CD4-positive, alpha-beta memory T cell (primary cell): ENCODE measurements at regions of chr10 and their contacts with region 1.

Region 1: DNA sequence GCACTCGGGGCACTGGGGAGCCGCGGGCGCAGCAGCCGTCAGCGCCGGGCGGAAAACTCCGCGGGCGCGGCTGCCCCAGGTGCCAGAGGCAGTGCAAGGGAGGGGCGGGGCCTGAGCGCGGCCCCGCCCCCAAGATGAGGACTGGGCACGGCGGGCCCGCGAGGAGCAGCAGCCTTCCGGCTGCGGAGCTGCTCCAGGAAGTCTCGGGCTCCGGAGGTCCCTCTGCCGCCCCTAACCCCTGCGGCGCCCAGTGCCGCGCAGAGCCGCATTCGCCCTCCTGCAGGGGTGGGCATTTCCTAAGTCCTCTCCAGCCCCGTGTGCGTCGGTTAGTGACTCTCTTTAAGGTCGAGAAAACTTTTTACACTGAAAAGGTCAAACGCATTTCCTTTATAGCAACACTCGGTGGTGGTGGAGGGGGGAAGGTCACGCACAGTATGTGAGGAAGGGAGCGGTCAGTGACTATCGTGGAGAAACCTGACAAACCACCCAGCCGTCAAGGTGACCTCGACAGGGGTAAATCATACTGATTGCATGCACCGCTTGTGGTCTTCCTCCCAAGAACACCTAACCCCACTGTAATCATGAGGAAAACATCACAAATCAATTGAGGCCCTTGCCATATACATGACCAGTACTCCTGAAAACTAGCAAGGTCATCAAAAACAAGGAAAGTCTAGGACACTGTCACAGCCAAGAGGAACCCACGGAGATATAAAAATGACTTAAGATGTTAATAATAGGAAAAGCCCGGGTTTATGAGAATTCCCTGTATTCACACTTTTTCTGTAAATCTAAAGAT is at the start of gene ANXA11:
- DNase-seq: peak; percentile 82 to 86 (median 83)
- H3K4me3 ChIP-seq: peak within 1 kb of the TSS; percentile 63 to 96
- H3K4me3 Mint-ChIP-seq: peak within 1 kb of the TSS; percentile 88 to 99 (median 92)
- H3K27ac ChIP-seq: peak within 1 kb of the TSS; percentile 82
- H3K27ac Mint-ChIP-seq: peak within 1 kb of the TSS; percentile 93 to 97 (median 95)
- H3K4me1 ChIP-seq: peaks cover 54% of the 10 kb centered on the region
- H3K4me1 Mint-ChIP-seq: peaks cover 35 to 58% (median 49%) of the 10 kb centered on the region in 4 donors
- H3K27me3 ChIP-seq: no peaks in the 10 kb centered on the region
- H3K27me3 Mint-ChIP-seq: no peaks in the 10 kb centered on the region
- total RNA-seq, gene ANXA11: 202 to 211 TPM

Region 2: DNA sequence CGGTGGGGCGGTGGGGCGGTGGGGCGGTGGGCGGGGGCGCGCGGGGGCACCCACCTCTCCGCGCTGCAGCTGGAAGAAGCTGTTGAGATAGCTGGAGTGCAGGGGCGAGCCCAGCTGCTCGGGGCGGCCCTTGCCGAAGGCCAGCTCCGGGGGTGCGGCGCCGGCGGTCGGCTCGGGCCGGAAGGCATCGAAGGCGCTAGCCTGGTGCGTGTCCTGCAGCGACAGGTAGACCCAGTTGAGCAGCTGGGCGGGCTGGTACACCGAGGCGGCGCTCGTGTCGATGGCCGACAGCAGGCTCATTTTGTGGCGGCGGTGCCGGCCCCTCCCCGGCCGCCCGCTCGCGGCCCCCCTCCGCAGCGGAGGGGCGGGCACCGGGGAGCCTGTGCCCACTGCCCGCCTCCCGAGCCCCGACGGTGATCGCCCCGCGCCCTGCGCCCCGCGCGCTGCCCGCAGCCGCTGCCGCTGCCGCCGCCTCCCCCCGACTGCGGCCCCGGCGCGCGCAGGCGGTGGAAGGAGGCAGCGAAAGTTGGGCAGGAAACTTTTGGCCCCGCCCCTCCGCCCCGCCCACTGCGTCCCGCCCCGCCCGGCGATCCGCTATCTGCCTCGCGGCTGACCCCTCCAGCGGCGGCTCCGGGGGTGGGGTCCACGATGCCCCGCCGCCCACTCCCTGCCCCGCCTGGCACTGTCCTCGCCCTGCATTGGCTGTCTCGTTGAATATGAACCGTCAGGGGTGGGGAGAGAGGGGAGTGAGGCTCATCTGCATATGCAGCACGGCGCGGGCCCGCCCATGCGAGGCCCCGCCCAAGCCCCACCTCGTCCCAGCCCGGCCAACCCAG is 760.3 kb before region 1 on chr10 and contains the start of gene ZCCHC24:
- CTCF ChIA-PET with region 1: no interaction called
- POLR2A ChIA-PET with region 1: no interaction called
- intact Hi-C with region 1: loop called (anchors 5 kb)
- DNase-seq: peak; percentile 95 to 97 (median 97)
- H3K4me3 ChIP-seq: peak within 1 kb of the TSS; percentile 63 to 64
- H3K4me3 Mint-ChIP-seq: peak within 1 kb of the TSS; percentile 87 to 98 (median 90)
- H3K27ac ChIP-seq: peak within 1 kb of the TSS; percentile 57
- H3K27ac Mint-ChIP-seq: peak within 1 kb of the TSS; percentile 85 to 98 (median 91)
- H3K4me1 ChIP-seq: peaks cover 21% of the 10 kb centered on the region
- H3K4me1 Mint-ChIP-seq: peaks cover 17 to 34% (median 23%) of the 10 kb centered on the region in 4 donors
- H3K27me3 ChIP-seq: no peaks in the 10 kb centered on the region
- H3K27me3 Mint-ChIP-seq: no peaks in the 10 kb centered on the region
- total RNA-seq, gene ZCCHC24: 1.7 to 1.9 TPM

Region 3: GRCh38 chr10:80132299-80133139 is 73.2 kb before region 1 on chr10 and contains the start of gene PLAC9:
- CTCF ChIA-PET with region 1: no interaction called
- POLR2A ChIA-PET with region 1: no interaction called
- intact Hi-C with region 1: no loop called
- DNase-seq: no peak
- H3K4me3 ChIP-seq: no peak within 1 kb of the TSS
- H3K4me3 Mint-ChIP-seq: peak within 1 kb of the TSS in 3 of 8 donors; percentile 13 to 41 (median 39)
- H3K27ac ChIP-seq: no peak within 1 kb of the TSS
- H3K27ac Mint-ChIP-seq: peak within 1 kb of the TSS in 1 of 7 donors; percentile 38
- H3K4me1 ChIP-seq: no peaks in the 10 kb centered on the region
- H3K4me1 Mint-ChIP-seq: peaks cover 0 to 3% (median 0%) of the 10 kb centered on the region in 4 donors
- H3K27me3 ChIP-seq: peaks cover 6% of the 10 kb centered on the region
- H3K27me3 Mint-ChIP-seq: peaks cover 24 to 28% of the 10 kb centered on the region in 2 donors
- total RNA-seq, gene PLAC9: not detected

Region 4: DNA sequence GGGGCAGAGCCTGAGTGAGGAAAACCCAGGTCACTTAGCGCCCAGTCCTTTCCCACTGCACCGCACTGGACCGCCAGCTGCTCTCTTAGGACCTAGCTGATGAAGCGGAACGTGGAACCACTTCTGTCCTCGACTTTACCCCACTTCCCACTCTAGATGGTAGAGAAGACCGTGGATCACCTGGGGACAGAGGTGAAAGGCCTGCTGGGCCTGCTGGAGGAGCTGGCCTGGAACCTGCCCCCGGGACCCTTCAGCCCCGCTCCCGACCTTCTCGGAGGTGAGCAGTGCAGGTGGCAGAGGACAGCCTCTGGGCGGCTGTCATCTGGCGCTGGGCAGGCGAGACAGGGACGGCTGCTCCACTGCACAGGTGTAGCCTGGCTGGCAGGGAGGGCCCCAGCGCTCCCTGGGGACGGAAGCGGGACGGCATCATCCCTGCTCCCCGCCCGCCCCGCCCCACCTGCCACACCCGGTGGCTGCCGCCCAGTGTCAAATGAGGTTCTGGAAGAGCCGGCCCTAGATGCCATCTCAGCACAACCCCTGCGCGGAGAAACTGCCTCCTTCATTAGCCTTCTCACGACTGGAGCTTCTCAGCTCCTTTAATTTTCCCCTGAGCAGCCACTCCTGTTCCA is 61.5 kb before region 1 on chr10:
- CTCF ChIA-PET with region 1: interaction called, 27 read pairs
- POLR2A ChIA-PET with region 1: interaction called, 43 read pairs
- intact Hi-C with region 1: loop called (anchors 1 kb)
- DNase-seq: peak in 2 of 5 donors; percentile 22 to 48
- H3K4me3 ChIP-seq: peak overlapping the region; percentile 30 to 57
- H3K4me3 Mint-ChIP-seq: peak overlapping the region; percentile 81 to 90 (median 84)
- H3K27ac ChIP-seq: peak overlapping the region; percentile 40
- H3K27ac Mint-ChIP-seq: peak overlapping the region; percentile 59 to 97 (median 84)
- H3K4me1 ChIP-seq: peaks cover 17% of the 10 kb centered on the region
- H3K4me1 Mint-ChIP-seq: peaks cover 15 to 24% (median 19%) of the 10 kb centered on the region in 4 donors
- H3K27me3 ChIP-seq: no peaks in the 10 kb centered on the region
- H3K27me3 Mint-ChIP-seq: peaks cover 6 to 9% of the 10 kb centered on the region in 2 donors

Region 5: DNA sequence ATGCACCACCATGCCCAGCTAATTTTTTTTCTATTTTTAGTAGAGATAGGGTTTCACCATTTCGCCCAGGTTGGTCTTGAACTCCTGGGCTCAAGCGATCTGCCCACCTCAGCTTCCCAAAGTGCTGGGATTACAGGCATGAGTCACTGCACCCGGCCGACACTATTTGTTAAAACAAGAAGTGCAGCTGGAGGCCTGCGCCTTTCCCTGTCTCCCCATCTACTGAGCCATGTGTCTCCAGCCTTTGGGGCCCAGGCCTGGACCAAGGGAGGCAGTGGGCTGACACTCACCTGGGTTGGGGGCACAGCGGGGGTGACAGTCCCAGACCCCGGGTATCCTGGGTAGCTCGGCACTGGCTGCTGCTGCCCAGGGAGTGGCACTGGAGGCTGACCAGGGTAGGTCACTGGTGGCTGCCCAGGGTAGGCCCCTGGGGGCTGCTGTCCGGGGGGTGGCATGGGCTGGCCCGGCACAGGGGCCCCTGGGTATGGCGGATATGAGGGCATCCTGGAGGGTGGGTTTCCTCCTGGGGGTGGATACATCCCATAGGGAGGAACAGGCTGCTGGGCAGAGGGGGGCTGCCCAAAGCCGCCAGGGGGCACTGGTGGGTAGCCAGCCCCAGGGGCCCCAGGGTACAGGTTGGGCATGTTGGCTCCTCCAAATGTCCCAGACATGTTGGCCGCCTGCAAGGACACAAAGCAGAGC is 36.8 kb before region 1 on chr10:
- CTCF ChIA-PET with region 1: interaction called, 6 read pairs
- POLR2A ChIA-PET with region 1: interaction called, 5 read pairs
- intact Hi-C with region 1: loop called (anchors 5 kb)
- DNase-seq: peak in 3 of 5 donors; percentile 12 to 25 (median 15)
- H3K4me3 ChIP-seq: no peak overlapping the region
- H3K4me3 Mint-ChIP-seq: no peak overlapping the region
- H3K27ac ChIP-seq: no peak overlapping the region
- H3K27ac Mint-ChIP-seq: peak overlapping the region in 2 of 7 donors; percentile 37 to 86
- H3K4me1 ChIP-seq: peaks cover 8% of the 10 kb centered on the region
- H3K4me1 Mint-ChIP-seq: peaks cover 9 to 16% (median 11%) of the 10 kb centered on the region in 4 donors
- H3K27me3 ChIP-seq: no peaks in the 10 kb centered on the region
- H3K27me3 Mint-ChIP-seq: no peaks in the 10 kb centered on the region

Region 6: DNA sequence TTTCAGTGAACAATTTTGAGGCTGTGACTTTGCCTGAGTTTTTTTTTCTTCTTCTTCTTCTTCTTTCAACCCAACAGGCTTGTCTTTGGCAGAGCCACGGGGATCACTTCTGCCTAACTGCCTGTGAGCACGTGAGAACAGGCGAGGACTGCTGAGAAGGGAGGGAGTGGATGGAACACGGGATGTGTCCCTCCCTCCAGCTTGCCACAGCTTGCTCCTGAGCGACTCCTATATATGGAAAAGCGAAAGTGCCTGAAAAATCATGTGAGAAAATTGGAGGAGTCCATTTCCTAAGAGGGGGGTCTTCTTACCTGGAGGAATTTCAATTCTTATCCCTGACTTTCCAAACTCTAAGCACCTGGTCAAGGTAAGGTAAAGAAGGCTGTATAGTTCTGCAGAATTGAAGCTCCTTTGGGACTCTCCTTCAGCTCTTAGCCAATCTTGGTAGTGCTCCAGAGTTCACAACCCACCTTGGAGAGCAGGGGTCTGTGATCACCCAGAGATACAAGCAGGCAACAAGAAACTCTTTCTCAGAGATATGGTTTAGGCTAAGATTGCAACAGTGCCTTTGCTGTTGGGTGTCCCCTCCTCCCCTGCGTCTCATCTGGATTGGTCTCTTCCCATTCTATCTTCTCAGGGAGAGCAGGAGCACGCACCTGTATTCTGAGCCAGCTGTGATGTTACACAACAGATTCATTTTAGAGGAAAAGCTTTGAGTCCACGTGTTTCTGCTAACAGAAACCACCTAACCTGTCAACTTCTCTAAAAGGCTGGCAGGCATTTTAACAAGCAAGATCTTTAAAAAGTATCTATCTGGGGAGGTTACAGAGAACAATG is 84.0 kb after region 1 on chr10 and contains the start of gene MAT1A:
- CTCF ChIA-PET with region 1: no interaction called
- POLR2A ChIA-PET with region 1: no interaction called
- intact Hi-C with region 1: no loop called
- DNase-seq: no peak
- H3K4me3 ChIP-seq: no peak within 1 kb of the TSS
- H3K4me3 Mint-ChIP-seq: no peak within 1 kb of the TSS
- H3K27ac ChIP-seq: no peak within 1 kb of the TSS
- H3K27ac Mint-ChIP-seq: no peak within 1 kb of the TSS
- H3K4me1 ChIP-seq: no peaks in the 10 kb centered on the region
- H3K4me1 Mint-ChIP-seq: peaks cover 0 to 2% (median 0%) of the 10 kb centered on the region in 4 donors
- H3K27me3 ChIP-seq: no peaks in the 10 kb centered on the region
- H3K27me3 Mint-ChIP-seq: peaks cover 13 to 24% of the 10 kb centered on the region in 2 donors
- total RNA-seq, gene MAT1A: not detected

Region 7: GRCh38 chr10:80453701-80454513 is 248.2 kb after region 1 on chr10 and contains the start of gene TSPAN14:
- CTCF ChIA-PET with region 1: no interaction called
- POLR2A ChIA-PET with region 1: no interaction called
- intact Hi-C with region 1: loop called (anchors 5 kb)
- DNase-seq: peak; percentile 66 to 76 (median 73)
- H3K4me3 ChIP-seq: peak within 1 kb of the TSS; percentile 70 to 76
- H3K4me3 Mint-ChIP-seq: peak within 1 kb of the TSS; percentile 90 to 100 (median 98)
- H3K27ac ChIP-seq: peak within 1 kb of the TSS; percentile 83
- H3K27ac Mint-ChIP-seq: peak within 1 kb of the TSS; percentile 93 to 100 (median 96)
- H3K4me1 ChIP-seq: peaks cover 31% of the 10 kb centered on the region
- H3K4me1 Mint-ChIP-seq: peaks cover 29 to 53% (median 35%) of the 10 kb centered on the region in 4 donors
- H3K27me3 ChIP-seq: no peaks in the 10 kb centered on the region
- H3K27me3 Mint-ChIP-seq: no peaks in the 10 kb centered on the region
- total RNA-seq, gene TSPAN14: 151 to 153 TPM